ENCODE measurements at regions of chr5 and their contacts with region 1.

Region 1: DNA sequence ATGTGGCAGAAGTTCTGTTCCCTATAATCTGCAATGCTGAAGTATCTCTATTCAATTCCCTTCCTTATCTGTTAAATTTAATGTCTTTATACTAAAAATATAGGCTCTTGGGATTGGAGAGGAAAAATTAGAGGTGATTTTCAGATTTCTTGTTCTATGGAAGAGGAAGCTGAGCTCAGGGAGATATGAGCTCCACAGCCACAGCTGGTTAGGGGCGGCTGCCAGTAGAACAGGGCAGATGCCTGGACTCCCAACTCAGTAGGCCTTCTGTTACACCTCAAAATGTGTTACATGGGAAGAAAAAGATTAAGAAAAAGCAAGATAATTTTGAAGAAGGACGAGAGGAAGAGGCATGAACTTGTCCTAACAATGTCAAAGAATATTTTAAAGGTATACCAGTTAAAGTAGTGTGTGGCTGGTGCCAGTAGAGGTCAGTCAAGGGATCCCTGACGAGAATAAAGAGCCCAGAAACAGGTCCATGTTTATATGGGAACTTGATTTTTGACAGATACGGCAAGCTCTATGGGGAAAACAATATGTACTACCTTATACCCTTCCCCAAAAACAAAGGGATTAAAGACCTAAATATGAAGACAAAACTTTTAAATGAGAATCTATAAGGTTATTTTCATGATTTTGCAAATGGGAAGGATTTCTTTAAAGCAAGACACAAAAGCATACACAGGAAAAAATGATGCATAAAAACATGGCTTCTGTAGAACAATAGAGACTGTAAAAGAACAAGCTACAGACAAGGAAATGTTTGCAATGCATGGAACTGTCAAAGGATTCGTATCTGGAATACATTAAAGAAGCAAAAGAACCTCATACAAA is 28.7 kb downstream of the DNAJC21 start:
- H3K4me3 ChIP-seq: no peak overlapping the region
- H3K27ac ChIP-seq: no peak overlapping the region
- H3K4me1 ChIP-seq: no peaks in the 10 kb centered on the region
- CTCF ChIP-seq: peak; percentile 24; the same call in 1 of the 2 replicates

Region 2: DNA sequence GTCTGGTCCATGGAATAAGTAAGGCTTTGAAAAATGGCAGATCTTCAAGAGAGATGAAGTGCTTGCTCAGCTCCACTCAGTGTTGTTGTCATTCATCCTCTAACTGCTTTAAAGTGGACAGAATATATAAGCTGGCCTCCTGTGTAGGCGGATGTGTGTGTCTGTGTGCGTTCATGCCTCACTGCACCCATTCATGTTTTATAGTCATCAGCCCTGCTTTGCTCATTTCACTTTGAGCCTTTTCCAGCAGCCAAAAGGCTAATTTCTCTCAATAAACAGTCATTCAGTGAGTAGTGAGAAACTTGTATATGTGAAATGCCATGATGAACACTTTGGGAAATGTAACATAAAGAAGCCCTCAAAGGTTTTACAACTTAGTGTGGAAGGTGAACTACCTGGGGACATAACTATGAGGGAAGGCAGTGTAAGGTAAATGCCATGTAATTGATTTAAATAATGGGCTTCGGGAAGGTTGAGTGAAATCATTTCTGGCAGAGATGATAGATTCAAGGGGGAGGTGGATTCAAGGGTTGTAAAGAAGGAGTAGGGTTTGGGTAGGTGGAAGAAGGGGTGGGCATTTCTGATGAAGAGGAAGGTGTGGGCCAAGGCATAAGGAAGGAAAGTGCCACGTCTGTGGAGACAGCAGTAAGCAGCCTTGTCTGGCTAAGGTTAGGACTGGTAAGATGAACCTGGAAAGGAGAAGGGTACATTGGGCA is 103.5 kb before region 1 on chr5:
- CTCF ChIA-PET with region 1: no interaction called
- POLR2A ChIA-PET with region 1: no interaction called
- H3K4me3 ChIP-seq: no peak overlapping the region
- H3K27ac ChIP-seq: no peak overlapping the region
- H3K4me1 ChIP-seq: peaks cover 13% of the 10 kb centered on the region
- CTCF ChIP-seq: no peak

Region 3: GRCh38 chr5:34968258-34968657 is 10.2 kb after region 1 on chr5:
- CTCF ChIA-PET with region 1: interaction called, 10 read pairs
- POLR2A ChIA-PET with region 1: no interaction called
- H3K4me3 ChIP-seq: no peak overlapping the region
- H3K27ac ChIP-seq: no peak overlapping the region
- H3K4me1 ChIP-seq: no peaks in the 10 kb centered on the region
- CTCF ChIP-seq: no peak

Measured in HEK293 (cell line).